ENCODE measurements at regions of chr15 and their contacts with region 1.

Region 1: DNA sequence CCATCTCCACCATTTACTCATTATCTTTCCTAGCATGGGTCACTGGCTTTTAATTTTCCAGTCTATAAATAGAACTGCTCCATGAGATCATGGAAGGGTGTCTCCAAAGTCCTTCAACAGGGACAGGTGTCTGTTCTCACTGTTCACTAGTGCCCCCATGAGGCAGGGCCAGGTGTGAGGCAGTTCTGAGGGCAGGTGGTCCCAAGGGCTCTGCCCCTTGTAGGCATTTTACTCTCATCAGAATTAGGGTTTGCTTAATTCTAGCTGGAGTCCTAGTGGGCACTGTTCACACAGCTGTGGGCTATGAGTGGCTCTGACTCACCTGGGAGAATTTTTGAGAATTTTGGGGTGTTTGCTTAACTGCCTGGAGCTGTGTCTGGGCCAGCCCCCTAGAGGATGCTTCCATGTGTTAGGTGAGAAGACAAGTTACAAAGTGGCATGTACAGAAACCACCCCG is 248.0 kb upstream of the LYSMD4 start:
- DNase-seq: no peak
- ATAC-seq: peak; percentile 54 to 86 (median 57)
- H3K4me3 ChIP-seq: no peak overlapping the region
- H3K27ac ChIP-seq: no peak overlapping the region
- H3K4me1 ChIP-seq: peaks cover 0 to 19% (median 3%) of the 10 kb centered on the region in 12 donors
- H3K27me3 ChIP-seq: no peaks in the 10 kb centered on the region
- CTCF ChIP-seq: peak in 6 of 12 donors; percentile 6 to 39 (median 28)
- POLR2A ChIP-seq: no peak

Region 2: DNA sequence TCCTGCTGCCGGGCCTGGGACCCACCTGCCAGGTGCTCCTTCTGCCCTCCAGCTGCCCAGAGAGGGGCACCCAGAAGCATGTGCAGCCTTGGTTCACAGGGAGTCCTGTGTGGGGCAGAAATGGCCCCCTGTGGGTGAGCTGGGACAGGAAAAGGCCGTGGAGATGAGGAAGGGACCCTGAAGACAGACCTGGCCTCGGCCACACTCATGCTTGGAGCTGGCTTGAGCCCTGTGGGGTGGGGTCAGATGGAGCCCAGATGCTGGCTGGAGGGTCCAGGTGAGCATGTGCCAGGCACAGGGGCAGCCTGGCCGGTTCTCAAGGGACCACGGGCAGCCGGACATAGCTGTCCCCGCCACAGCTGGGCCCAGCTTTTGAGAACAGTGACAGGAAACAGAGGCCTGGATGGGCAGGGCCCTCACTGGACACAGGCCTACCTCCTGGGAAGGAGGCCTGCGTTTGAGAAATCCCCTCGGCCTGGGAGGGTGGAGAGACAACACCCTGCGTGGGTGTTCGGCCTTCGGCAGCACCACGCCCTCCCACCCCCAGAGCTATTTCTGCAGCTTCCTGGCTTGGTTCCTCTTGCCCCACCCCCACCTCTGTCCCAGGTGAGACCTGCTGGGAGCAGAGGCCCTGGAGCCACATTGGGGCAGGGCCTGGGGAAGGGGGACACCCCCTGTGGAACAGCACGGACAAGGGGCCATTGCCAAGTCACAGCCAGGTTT is 548.0 kb before region 1 on chr15:
- intact Hi-C with region 1: no loop called
- DNase-seq: peak in 4 of 5 donors; percentile 63 to 74 (median 69)
- ATAC-seq: peak; percentile 19 to 84 (median 50)
- H3K4me3 ChIP-seq: no peak overlapping the region
- H3K27ac ChIP-seq: peak overlapping the region; percentile 17 to 77 (median 68)
- H3K4me1 ChIP-seq: peaks cover 5 to 61% (median 49%) of the 10 kb centered on the region in 12 donors
- H3K27me3 ChIP-seq: no peaks in the 10 kb centered on the region
- CTCF ChIP-seq: no peak
- POLR2A ChIP-seq: no peak

Region 3: DNA sequence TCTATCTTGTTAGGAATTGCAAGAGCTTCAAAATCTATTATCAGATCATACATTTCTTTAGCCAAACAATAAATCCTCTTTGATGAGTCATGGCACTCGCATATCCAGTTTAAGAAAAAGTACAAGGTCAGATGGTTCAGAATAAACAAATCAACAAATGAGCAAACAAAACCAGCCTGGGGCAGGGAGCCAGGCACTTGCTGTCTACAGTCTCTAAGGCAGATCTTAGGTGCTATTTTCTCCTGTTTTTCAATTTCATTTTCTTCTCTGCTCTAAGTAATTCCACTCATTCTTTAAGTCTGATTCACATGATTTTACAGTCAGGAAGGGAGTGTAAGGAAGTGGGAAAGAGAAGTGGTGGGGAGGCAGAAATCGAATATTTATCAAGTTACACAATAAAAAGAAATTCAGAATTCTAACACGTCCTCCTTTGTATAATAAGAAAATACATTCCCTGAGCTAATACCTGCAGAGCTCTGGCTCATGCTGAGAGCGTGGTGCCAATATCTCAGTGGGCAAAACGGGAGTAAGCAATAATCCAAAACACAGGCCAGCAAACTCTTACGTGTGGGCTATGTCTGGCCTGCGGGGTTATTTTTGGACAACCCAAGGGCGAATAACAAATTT is 61.9 kb after region 1 on chr15:
- intact Hi-C with region 1: loop called in 1 of 10 experiments (anchors 10 kb)
- DNase-seq: no peak
- ATAC-seq: peak in 2 of 4 donors; percentile 41 to 45
- H3K4me3 ChIP-seq: no peak overlapping the region
- H3K27ac ChIP-seq: peak overlapping the region in 3 of 12 donors; percentile 10 to 49 (median 27)
- H3K4me1 ChIP-seq: peaks cover 0 to 15% (median 5%) of the 10 kb centered on the region in 12 donors
- H3K27me3 ChIP-seq: no peaks in the 10 kb centered on the region
- CTCF ChIP-seq: no peak
- POLR2A ChIP-seq: no peak

Measured in heart left ventricle (tissue), 16 donors.